Activated CD4-positive, alpha-beta memory T cell treated with anti-CD3 and anti-CD28 coated beads for 36 hours (primary cell): ENCODE measurements at regions of chr2 and their contacts with region 1.

Region 1: GRCh38 chr2:207283356-207283755 is 117.6 kb upstream of the KLF7 start:
- DNase-seq: peak; percentile 34
- H3K4me3 Mint-ChIP-seq: no peak overlapping the region
- H3K27ac Mint-ChIP-seq: peak overlapping the region; percentile 65
- H3K4me1 Mint-ChIP-seq: peaks cover 67% of the 10 kb centered on the region
- H3K27me3 Mint-ChIP-seq: no peaks in the 10 kb centered on the region

Region 2: DNA sequence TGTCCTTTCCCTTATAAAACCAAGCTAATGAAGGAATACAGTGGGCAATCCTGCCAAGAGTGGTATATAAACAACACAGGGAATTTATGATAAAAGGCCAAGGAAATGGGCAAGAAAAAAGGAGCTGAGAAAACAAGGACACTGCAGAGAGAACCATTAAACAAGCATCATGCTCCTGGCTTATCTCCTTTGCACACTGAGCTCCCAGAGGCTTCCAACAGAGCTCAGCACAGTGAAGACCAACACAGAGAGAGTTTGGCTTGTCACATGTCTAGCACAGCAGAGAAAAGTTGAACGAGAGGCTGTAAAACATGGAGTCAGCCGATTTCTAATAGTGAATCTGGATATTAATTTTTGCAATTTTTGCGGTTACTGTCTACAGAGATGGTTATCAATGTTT is 49.6 kb before region 1 on chr2:
- CTCF ChIA-PET with region 1: no interaction called
- POLR2A ChIA-PET with region 1: no interaction called
- intact Hi-C with region 1: no loop called
- DNase-seq: no peak
- H3K4me3 Mint-ChIP-seq: no peak overlapping the region
- H3K27ac Mint-ChIP-seq: no peak overlapping the region
- H3K4me1 Mint-ChIP-seq: peaks cover 39% of the 10 kb centered on the region
- H3K27me3 Mint-ChIP-seq: no peaks in the 10 kb centered on the region

Region 3: DNA sequence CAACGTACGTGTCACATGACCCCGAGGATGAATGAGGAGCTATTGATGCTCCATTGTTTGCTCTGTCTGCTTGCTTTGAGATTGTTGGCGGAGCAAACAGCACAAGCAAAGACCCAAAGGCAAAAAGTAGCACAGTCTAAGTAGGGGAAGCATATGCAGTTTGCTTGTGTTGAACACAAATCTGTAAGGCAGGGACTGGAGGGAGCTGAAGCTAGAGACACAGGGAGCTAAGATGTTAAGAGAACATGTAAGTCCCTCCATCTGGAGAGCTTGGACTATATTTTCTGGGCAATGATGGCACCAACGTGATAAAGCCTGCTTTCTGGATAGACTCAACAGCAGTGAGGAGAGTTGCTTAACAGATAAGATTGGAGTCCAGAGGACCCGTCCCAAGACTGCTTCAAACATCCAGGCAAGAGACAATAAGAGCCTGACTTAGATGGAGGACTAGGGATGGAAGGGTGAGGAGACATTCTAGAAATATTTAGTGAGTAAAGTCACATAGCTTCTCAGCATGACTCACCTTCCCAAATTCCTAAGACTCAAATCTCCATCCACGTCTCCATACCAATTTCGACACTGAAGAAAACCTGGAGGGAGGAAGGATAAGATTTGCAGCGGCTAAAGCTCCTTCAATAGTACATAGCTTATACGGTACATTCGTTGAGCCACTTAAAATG is 29.6 kb before region 1 on chr2:
- CTCF ChIA-PET with region 1: interaction called, 3 read pairs
- POLR2A ChIA-PET with region 1: interaction called, 4 read pairs
- intact Hi-C with region 1: loop called (anchors 2 kb)
- DNase-seq: no peak
- H3K4me3 Mint-ChIP-seq: no peak overlapping the region
- H3K27ac Mint-ChIP-seq: peak overlapping the region; percentile 9
- H3K4me1 Mint-ChIP-seq: peaks cover 56% of the 10 kb centered on the region
- H3K27me3 Mint-ChIP-seq: peaks cover 7% of the 10 kb centered on the region

Region 4: DNA sequence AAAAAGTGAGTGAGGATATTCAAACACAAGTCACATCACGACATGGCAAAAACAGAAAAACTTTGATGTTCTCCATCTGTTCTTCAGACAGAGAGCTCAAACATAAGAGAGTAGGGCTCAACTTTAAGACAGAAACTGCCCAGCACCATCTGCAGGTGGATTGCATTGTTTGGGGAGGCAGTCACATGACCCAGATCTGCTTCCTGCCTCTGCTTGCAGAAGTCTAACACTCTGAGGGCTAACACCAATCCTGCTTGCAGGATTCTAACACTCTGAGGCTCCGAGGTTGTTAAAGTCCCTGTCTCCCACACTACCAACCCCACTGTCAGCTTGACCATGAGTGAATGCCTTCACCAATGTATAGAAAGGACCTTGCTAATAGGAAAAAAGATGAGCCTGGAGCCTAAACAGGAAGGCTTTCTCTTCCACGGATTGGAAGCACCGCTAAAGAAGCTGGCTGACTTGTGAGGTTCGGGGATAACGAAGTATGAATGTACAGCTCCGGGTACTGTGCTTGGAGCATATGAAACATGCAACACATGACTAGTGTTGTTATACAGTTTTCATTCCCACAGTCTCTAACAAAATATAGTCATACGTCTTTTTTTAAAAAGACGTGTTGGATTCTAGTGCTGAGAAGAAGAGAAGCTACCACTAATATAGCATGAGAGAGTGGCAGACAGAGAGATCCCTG is 69.8 kb after region 1 on chr2:
- CTCF ChIA-PET with region 1: no interaction called
- POLR2A ChIA-PET with region 1: no interaction called
- intact Hi-C with region 1: no loop called
- DNase-seq: peak; percentile 55
- H3K4me3 Mint-ChIP-seq: no peak overlapping the region
- H3K27ac Mint-ChIP-seq: no peak overlapping the region
- H3K4me1 Mint-ChIP-seq: peaks cover 8% of the 10 kb centered on the region
- H3K27me3 Mint-ChIP-seq: no peaks in the 10 kb centered on the region